ENCODE measurements at regions of chr15 and their contacts with region 1.

Region 1: DNA sequence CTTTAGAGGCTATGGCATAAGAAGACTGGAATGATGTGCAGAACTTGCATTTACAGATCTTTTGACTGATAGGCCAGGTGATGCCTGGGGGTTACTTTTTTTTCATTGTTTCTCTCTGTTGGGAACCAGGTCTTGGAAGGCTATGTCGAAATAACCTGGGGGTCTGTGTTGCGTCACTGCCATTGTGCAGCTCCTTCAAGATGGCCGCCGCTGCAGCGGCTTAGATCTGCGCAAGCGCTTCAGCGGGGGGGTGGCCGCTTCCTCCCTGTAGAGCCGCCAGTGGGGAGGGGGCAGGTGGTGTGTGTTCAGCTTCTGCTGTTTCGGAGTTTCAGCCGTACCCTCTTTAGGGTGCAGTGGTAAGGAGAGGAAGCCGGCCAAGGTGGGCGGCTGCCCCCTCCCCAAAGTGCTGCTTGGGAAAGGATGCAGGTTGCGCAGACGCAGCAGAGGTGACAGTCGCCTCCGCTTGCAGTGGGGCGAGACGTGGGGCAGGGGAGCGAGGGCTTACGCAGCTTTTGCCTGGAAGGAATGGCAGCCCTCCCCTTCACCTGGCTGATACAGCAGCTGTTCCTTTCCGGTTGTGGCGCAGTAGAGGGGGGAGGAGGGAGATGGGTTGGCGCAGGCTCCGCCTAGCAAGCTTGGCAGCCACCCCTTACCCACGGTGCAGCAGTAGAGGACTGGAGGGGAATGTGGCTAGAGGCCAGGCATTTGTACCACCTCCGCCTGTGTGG is 1.5 kb downstream of the SNRPN start:
- DNase-seq: peak; percentile 39 to 68
- H3K4me3 ChIP-seq: peak overlapping the region; percentile 70 to 94 (median 80)
- H3K27ac ChIP-seq: peak overlapping the region; percentile 67; the same call in 1 of the 2 replicates
- H3K4me1 ChIP-seq: peaks cover 0 to 8% (median 3%) of the 10 kb centered on the region in 4 experiments; a peak in 2 of 7 replicates
- H3K27me3 ChIP-seq: no peaks in the 10 kb centered on the region
- CTCF ChIP-seq: no peak
- EP300 ChIP-seq: no peak
- POLR2A ChIP-seq: peak; percentile 66 to 94; a peak in 2 of 3 replicates
- RAD21 ChIP-seq: no peak

Region 2: DNA sequence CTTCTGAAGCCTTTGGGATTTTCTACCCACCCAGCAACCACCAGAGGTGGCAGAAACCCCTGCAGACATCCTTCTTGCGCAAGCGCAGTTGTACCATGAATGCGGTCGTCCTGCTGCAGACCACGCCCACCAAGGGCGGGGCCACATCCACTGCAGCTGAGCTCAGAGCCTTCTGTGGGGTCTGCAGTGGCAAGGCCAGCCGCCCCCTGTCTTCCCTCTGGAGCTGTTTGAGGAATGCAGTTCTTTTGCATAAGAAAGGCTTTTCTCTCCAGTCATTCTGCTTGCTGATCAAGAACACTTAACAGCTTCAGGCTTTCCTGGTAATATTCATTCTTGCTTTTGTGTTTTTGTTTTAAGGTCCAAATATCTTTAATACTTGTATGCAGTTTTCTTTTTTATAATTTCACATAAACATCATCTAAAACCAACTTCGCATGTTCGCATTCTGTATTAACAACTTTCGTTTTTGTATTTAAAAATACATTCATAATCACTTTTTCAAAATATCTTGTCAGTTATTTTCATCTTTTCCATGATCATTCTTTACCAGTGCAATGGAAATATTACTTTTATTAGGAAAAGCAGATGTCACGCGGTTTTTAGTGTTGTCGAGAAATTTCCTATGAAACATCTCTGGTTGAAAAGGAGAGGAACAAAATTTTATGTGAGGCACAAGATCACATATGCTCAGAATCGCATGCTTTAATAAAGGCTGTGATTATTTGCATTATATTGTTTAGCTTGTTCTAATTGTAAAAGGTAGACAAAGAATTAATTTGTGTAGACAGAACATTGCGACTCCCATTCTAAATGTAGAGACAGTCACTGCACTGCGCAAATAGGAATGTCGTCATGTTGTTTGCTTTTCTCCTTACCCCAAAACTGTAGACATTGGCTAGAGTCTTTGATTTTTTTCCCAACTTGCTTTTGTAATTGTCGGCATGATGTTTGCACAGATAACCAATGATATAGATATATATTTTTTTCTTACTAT is 99.6 kb before region 1 on chr15:
- CTCF ChIA-PET with region 1: no interaction called
- POLR2A ChIA-PET with region 1: interaction called, 50 read pairs
- DNase-seq: peak; percentile 88 to 97
- H3K4me3 ChIP-seq: peak overlapping the region in 3 of 4 experiments; percentile 1 to 57 (median 34); a peak in 5 of 8 replicates
- H3K27ac ChIP-seq: peak overlapping the region; percentile 41; the same call in 1 of the 2 replicates
- H3K4me1 ChIP-seq: peaks cover 0 to 6% (median 1%) of the 10 kb centered on the region in 4 experiments; a peak in 3 of 7 replicates
- H3K27me3 ChIP-seq: no peaks in the 10 kb centered on the region
- CTCF ChIP-seq: peak in 1 of 3 experiments; percentile 19; a peak in 1 of 4 replicates
- EP300 ChIP-seq: peak in 1 of 2 experiments; percentile 37; a peak in 1 of 3 replicates
- POLR2A ChIP-seq: no peak; a peak in 1 of 3 replicates
- RAD21 ChIP-seq: peak; percentile 24 to 25; a peak in 3 of 4 replicates

Region 3: GRCh38 chr15:24919446-24919845 is 36.8 kb before region 1 on chr15:
- CTCF ChIA-PET with region 1: no interaction called
- POLR2A ChIA-PET with region 1: interaction called, 12 read pairs
- DNase-seq: peak in 1 of 2 experiments; percentile 48
- H3K4me3 ChIP-seq: peak overlapping the region in 3 of 4 experiments; percentile 12 to 39 (median 12); a peak in 4 of 8 replicates
- H3K27ac ChIP-seq: peak overlapping the region; percentile 37; the same call in 1 of the 2 replicates
- H3K4me1 ChIP-seq: peaks cover 0 to 14% (median 8%) of the 10 kb centered on the region in 4 experiments; a peak in 6 of 7 replicates
- H3K27me3 ChIP-seq: no peaks in the 10 kb centered on the region
- CTCF ChIP-seq: no peak
- EP300 ChIP-seq: peak in 1 of 2 experiments; percentile 58; a peak in 1 of 3 replicates
- POLR2A ChIP-seq: no peak
- RAD21 ChIP-seq: no peak

Region 4: GRCh38 chr15:24966364-24967103 is 10.3 kb after region 1 on chr15:
- CTCF ChIA-PET with region 1: no interaction called
- POLR2A ChIA-PET with region 1: interaction called, 37 read pairs
- DNase-seq: no peak
- H3K4me3 ChIP-seq: no peak overlapping the region
- H3K27ac ChIP-seq: no peak overlapping the region
- H3K4me1 ChIP-seq: peaks cover 0 to 2% (median 1%) of the 10 kb centered on the region in 4 experiments; a peak in 2 of 7 replicates
- H3K27me3 ChIP-seq: no peaks in the 10 kb centered on the region; a peak in 1 of 7 replicates
- CTCF ChIP-seq: no peak
- EP300 ChIP-seq: no peak
- POLR2A ChIP-seq: 0 out of 3 replicates have a peak, but pooled peaks of 1 of the 2 experiments have one; percentile 33
- RAD21 ChIP-seq: no peak

Region 5: GRCh38 chr15:24976932-24977331 is 20.7 kb after region 1 on chr15:
- CTCF ChIA-PET with region 1: no interaction called
- POLR2A ChIA-PET with region 1: interaction called, 32 read pairs
- DNase-seq: no peak
- H3K4me3 ChIP-seq: no peak overlapping the region
- H3K27ac ChIP-seq: no peak overlapping the region
- H3K4me1 ChIP-seq: no peaks in the 10 kb centered on the region; a peak in 1 of 7 replicates
- H3K27me3 ChIP-seq: no peaks in the 10 kb centered on the region
- CTCF ChIP-seq: peak in 1 of 3 experiments; percentile 15; a peak in 1 of 4 replicates
- EP300 ChIP-seq: no peak
- POLR2A ChIP-seq: peak in 1 of 2 experiments; percentile 17; a peak in 2 of 3 replicates
- RAD21 ChIP-seq: no peak